Right ventricle myocardium inferior (tissue), 1 donor: ENCODE measurements at regions of chr20 and their contacts with region 1.

Region 1: DNA sequence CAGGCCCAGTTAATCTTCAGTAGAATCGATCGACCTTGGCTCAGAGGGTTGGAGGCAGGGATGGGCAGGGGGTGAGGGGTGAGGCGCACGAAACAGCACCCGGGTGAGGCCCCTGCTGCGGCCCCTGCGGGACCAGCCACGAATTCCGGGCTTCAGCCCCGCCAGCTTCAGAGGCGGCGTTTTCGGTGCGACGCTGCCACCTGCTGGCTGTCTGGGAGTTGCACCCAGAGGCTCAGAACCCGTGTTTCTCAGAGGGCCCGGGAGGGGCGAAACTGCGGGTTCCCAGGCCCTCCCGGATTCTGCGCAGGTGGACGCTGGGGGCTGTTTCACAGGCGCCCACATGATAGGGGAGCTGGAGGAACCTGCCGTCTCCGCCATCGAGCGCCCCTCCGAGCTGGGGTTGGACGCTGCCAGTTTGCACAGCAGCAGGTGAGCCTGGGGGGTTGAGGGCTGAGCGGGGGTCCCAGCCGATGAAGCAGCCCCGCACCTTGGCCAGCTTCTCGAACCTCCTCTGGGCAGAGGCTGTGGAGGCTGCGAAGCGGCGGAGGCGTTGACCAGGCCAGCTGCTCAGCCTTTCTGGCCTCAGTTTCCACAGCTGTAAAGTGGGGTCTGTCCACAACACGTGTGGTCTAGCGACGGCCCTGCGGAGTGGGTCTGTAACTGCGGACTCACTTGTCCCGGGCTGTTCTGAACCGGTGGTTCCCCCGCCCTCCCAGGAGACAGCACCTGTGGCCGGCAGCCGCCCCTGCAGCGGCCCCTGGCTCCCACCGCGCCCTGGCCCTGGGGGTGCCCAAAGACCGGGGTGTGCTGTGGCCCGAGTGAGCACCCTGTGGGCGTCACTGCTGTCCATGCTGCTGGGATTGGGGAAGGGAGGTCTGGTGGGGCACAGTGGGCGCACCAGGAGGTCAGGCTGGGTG is 2.5 kb upstream of the BHLHE23 start:
- DNase-seq: peak; percentile 88
- ATAC-seq: peak; percentile 79

Region 2: GRCh38 chr20:62523473-62524203 is 485.7 kb before region 1 on chr20:
- intact Hi-C with region 1: no loop called
- DNase-seq: no peak
- ATAC-seq: no peak

Region 3: DNA sequence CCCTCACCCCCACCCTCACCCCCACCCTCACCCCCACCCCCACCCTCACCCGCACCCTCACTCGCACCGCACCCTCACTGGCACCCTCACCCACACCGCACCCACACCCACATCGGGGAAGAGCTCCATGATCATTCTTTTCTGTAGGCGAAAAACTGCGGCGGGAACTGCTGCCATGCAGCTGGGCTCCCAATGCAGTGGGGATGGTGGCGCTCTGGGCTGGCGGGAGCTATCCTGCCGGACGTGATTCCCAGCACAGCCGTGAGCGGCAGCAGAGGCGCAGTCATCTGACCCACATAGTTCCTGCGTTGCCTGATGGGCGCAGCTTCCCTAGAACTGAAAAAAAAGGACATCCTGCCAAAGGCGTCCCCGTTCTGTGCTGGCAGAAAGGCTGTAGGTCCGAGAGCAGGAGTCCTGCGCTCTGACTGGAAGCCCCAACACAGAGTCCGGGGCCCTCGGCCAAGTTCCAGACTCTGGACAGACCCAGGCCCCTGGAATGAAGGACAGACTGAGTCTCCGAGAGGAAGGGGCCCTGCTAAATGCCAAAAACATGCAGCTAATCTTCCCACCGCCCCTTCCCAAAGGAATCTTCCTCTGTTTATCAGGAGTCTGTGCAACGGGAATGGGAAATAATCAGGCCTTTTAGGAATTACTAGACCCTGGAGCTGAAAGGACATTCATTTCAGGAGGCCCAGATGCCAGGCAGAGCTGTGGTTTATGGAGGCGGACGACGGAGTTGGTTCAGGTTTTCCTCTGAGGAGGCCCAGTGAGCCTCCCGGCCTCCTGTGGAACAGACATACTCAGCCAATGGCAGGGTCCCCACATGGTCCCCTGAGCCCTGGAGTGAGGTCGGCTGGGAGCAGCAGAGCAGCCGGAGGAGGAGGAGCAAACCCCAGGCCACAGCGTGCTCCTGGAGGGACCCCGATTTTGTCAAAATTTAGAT is 133.6 kb before region 1 on chr20:
- intact Hi-C with region 1: loop called (anchors 1 kb)
- DNase-seq: peak; percentile 88
- ATAC-seq: peak; percentile 85

Region 4: GRCh38 chr20:62900052-62900691 is 109.1 kb before region 1 on chr20:
- intact Hi-C with region 1: loop called (anchors 2 kb)
- DNase-seq: peak; percentile 86
- ATAC-seq: peak; percentile 92

Region 5: DNA sequence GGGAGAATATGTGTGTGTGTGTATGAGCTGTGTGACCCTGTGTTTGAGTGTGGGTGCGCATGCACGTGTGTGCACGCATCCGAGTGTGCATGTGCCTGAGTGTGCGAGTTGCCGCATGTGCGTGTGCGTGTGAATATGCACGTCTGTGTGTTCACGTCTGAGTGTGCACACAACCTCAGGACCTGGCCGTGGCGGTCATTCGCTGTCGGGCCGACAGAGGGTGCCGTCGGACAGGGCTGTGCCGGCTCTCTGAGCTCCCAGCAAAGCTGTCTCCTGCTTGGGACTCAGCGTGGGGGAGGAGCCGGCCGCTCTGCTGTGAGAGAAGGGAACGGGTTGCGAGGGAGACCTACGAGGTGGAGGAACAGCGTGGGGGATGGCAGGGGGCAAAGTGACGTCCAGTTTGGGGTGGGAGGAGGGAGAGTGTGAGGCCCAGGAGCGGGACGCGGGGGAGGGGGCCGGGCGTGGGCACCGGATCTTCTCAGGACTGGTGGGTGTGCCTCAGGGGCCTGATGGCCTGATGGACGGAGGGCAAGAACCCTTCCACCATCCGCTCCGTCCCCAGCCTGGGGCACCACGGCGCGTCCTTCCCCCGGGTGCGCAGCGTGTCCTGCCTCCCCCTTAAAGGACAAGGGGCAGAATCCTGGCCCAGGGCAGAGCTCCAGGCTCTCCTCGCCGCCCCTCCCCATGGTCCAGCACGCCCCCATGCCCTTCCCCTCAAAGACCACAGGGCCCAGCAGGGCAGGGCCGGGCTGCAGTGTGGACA is 36.9 kb before region 1 on chr20:
- intact Hi-C with region 1: loop called (anchors 1 kb)
- DNase-seq: peak; percentile 90
- ATAC-seq: peak; percentile 92